MCF 10A (cell line): ENCODE measurements at regions of chr3 and their contacts with region 1.

Region 1: GRCh38 chr3:125916376-125916978 is 52.5 kb upstream of the ROPN1B start:
- DNase-seq: peak; percentile 90
- H3K4me3 Mint-ChIP-seq: peak overlapping the region; percentile 86
- H3K27ac Mint-ChIP-seq: peak overlapping the region; percentile 80
- H3K4me1 Mint-ChIP-seq: peaks cover 14% of the 10 kb centered on the region
- H3K27me3 Mint-ChIP-seq: no peaks in the 10 kb centered on the region
- CTCF ChIP-seq: no peak

Region 2: GRCh38 chr3:125594581-125595011 is 321.9 kb before region 1 on chr3:
- CTCF ChIA-PET with region 1: no interaction called
- POLR2A ChIA-PET with region 1: interaction called, 5 read pairs
- intact Hi-C with region 1: loop called (anchors 10 kb)
- DNase-seq: no peak
- H3K4me3 Mint-ChIP-seq: peak overlapping the region; percentile 92
- H3K27ac Mint-ChIP-seq: peak overlapping the region; percentile 65
- H3K4me1 Mint-ChIP-seq: peaks cover 8% of the 10 kb centered on the region
- H3K27me3 Mint-ChIP-seq: no peaks in the 10 kb centered on the region
- CTCF ChIP-seq: no peak

Region 3: GRCh38 chr3:125767641-125768040 is 148.8 kb before region 1 on chr3:
- CTCF ChIA-PET with region 1: no interaction called
- POLR2A ChIA-PET with region 1: interaction called, 3 read pairs
- intact Hi-C with region 1: loop called (anchors 5 kb)
- DNase-seq: no peak
- H3K4me3 Mint-ChIP-seq: no peak overlapping the region
- H3K27ac Mint-ChIP-seq: no peak overlapping the region
- H3K4me1 Mint-ChIP-seq: no peaks in the 10 kb centered on the region
- H3K27me3 Mint-ChIP-seq: peaks cover 32% of the 10 kb centered on the region
- CTCF ChIP-seq: no peak

Region 4: GRCh38 chr3:126064627-126065258 is 148.3 kb after region 1 on chr3:
- CTCF ChIA-PET with region 1: no interaction called
- POLR2A ChIA-PET with region 1: no interaction called
- intact Hi-C with region 1: no loop called
- DNase-seq: no peak
- H3K4me3 Mint-ChIP-seq: no peak overlapping the region
- H3K27ac Mint-ChIP-seq: no peak overlapping the region
- H3K4me1 Mint-ChIP-seq: no peaks in the 10 kb centered on the region
- H3K27me3 Mint-ChIP-seq: no peaks in the 10 kb centered on the region
- CTCF ChIP-seq: no peak